CD4-positive, alpha-beta T cell (primary cell): ENCODE measurements at regions of chr3 and their contacts with region 1.

Region 1: GRCh38 chr3:40329071-40329470 is 19.6 kb downstream of the EIF1B start:
- DNase-seq: no peak
- ATAC-seq: no peak
- H3K4me3 ChIP-seq: no peak overlapping the region
- H3K4me3 Mint-ChIP-seq: no peak overlapping the region
- H3K27ac ChIP-seq: no peak overlapping the region
- H3K27ac Mint-ChIP-seq: no peak overlapping the region
- H3K4me1 ChIP-seq: no peaks in the 10 kb centered on the region
- H3K4me1 Mint-ChIP-seq: no peaks in the 10 kb centered on the region
- H3K27me3 ChIP-seq: no peaks in the 10 kb centered on the region
- H3K27me3 Mint-ChIP-seq: no peaks in the 10 kb centered on the region
- CTCF ChIP-seq: no peak

Region 2: GRCh38 chr3:40580494-40581091 is 251.5 kb after region 1 on chr3:
- CTCF ChIA-PET with region 1: no interaction called
- POLR2A ChIA-PET with region 1: no interaction called
- intact Hi-C with region 1: loop called (anchors 1 to 2 kb)
- DNase-seq: peak; percentile 38 to 75 (median 49)
- ATAC-seq: peak; percentile 76
- H3K4me3 ChIP-seq: no peak overlapping the region
- H3K4me3 Mint-ChIP-seq: no peak overlapping the region
- H3K27ac ChIP-seq: no peak overlapping the region
- H3K27ac Mint-ChIP-seq: no peak overlapping the region
- H3K4me1 ChIP-seq: peaks cover 3% of the 10 kb centered on the region
- H3K4me1 Mint-ChIP-seq: no peaks in the 10 kb centered on the region
- H3K27me3 ChIP-seq: peaks cover 0 to 2% of the 10 kb centered on the region in 2 experiments
- H3K27me3 Mint-ChIP-seq: peaks cover 8% of the 10 kb centered on the region
- CTCF ChIP-seq: peak; percentile 89

Region 3: GRCh38 chr3:40920041-40920440 is 591.0 kb after region 1 on chr3:
- CTCF ChIA-PET with region 1: interaction called, 3 read pairs
- POLR2A ChIA-PET with region 1: no interaction called
- intact Hi-C with region 1: loop called in 1 of 2 experiments (anchors 5 kb)
- DNase-seq: peak in 1 of 14 experiments; percentile 8
- ATAC-seq: no peak
- H3K4me3 ChIP-seq: no peak overlapping the region
- H3K4me3 Mint-ChIP-seq: no peak overlapping the region
- H3K27ac ChIP-seq: no peak overlapping the region
- H3K27ac Mint-ChIP-seq: no peak overlapping the region
- H3K4me1 ChIP-seq: no peaks in the 10 kb centered on the region
- H3K4me1 Mint-ChIP-seq: no peaks in the 10 kb centered on the region
- H3K27me3 ChIP-seq: no peaks in the 10 kb centered on the region
- H3K27me3 Mint-ChIP-seq: no peaks in the 10 kb centered on the region
- CTCF ChIP-seq: no peak

Region 4: DNA sequence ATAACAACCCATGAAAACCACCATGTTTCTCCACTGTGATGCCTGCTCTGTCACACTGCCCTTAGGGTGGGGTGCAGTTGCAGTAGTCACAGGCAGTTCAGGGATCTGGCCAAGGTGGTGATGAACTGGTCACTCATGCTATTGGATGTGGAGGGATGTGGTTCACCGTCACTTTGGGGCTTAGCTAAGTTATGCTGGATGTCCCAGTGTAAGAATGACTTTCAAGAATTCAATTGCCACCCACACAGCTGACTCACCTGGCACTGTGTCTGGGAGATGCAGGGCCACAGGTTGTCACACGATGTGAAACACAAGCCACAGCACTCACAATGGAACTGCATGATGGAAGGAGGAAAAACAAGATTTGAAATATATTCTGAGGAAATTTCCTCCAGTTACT is 724.1 kb after region 1 on chr3:
- CTCF ChIA-PET with region 1: no interaction called
- POLR2A ChIA-PET with region 1: no interaction called
- intact Hi-C with region 1: no loop called
- DNase-seq: no peak
- ATAC-seq: no peak
- H3K4me3 ChIP-seq: no peak overlapping the region
- H3K4me3 Mint-ChIP-seq: no peak overlapping the region
- H3K27ac ChIP-seq: no peak overlapping the region
- H3K27ac Mint-ChIP-seq: no peak overlapping the region
- H3K4me1 ChIP-seq: no peaks in the 10 kb centered on the region
- H3K4me1 Mint-ChIP-seq: no peaks in the 10 kb centered on the region
- H3K27me3 ChIP-seq: no peaks in the 10 kb centered on the region
- H3K27me3 Mint-ChIP-seq: no peaks in the 10 kb centered on the region
- CTCF ChIP-seq: no peak